A549 (cell line): ENCODE measurements at regions of chr10 and their contacts with region 1.

Region 1: GRCh38 chr10:35027567-35027966 is 62.6 kb downstream of the CUL2 start:
- DNase-seq: no peak
- ATAC-seq: no peak
- H3K4me3 ChIP-seq: no peak overlapping the region
- H3K27ac ChIP-seq: no peak overlapping the region
- H3K4me1 ChIP-seq: peaks cover 3% of the 10 kb centered on the region; the same call in 1 of the 3 replicates
- CTCF ChIP-seq: peak; percentile 53
- EP300 ChIP-seq: no peak
- POLR2A ChIP-seq: no peak
- RAD21 ChIP-seq: peak; percentile 54 to 61; a peak in 4 of 5 replicates

Region 2: DNA sequence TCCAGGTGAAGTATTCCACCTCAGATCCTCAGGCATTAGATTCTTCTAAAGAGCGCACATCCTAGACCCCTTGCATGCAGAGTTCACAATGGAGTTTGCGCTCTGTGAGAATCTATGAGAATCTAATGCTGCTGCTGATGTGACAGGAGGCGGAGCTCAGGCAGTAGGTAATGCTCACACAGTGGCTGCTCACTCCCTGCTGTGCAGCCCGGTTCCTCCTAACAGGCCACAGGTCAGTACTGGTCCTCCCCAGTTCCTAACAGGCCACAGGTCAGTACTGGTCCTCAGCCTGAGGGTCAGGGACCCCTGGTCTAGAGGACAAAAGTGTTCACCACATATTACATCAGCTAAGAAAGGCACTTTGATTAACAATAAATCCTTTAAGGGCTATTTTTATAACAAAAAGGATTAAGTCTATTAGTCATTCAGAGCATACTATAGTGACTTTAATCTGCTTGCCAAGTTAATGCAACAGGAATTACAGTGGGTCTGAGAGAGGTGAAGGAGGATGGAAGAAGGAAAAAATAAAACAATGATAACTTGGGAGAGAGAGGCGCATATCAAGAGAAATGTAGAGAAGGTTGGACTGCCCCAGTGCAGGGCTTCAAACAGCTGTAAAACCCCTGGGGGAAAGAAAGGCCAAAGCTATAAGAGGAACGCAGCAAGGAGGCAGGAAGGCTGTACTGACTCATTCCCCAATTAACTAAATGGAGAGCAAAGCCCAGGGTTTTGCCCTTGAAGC is 13.4 kb after region 1 on chr10:
- CTCF ChIA-PET with region 1: interaction called, 23 read pairs
- POLR2A ChIA-PET with region 1: no interaction called
- DNase-seq: no peak
- ATAC-seq: peak; percentile 49 to 72; a peak in 4 of 6 replicates
- H3K4me3 ChIP-seq: no peak overlapping the region
- H3K27ac ChIP-seq: peak overlapping the region in 1 of 2 experiments; percentile 72; a peak in 3 of 6 replicates
- H3K4me1 ChIP-seq: peaks cover 43% of the 10 kb centered on the region
- CTCF ChIP-seq: no peak
- EP300 ChIP-seq: no peak
- POLR2A ChIP-seq: no peak
- RAD21 ChIP-seq: no peak